Left ventricle myocardium inferior (tissue), 1 donor: ENCODE measurements at regions of chr2 and their contacts with region 1.

Region 1: GRCh38 chr2:10048501-10049171 is 5.3 kb downstream of the KLF11 start:
- DNase-seq: no peak
- H3K4me3 ChIP-seq: no peak overlapping the region
- H3K27ac ChIP-seq: peak overlapping the region; percentile 9
- H3K4me1 ChIP-seq: peaks cover 90% of the 10 kb centered on the region
- H3K27me3 ChIP-seq: no peaks in the 10 kb centered on the region
- CTCF ChIP-seq: peak; percentile 75

Region 2: GRCh38 chr2:9984217-9984739 is 64.4 kb before region 1 on chr2:
- intact Hi-C with region 1: loop called (anchors 5 kb)
- DNase-seq: no peak
- H3K4me3 ChIP-seq: no peak overlapping the region
- H3K27ac ChIP-seq: peak overlapping the region; percentile 12
- H3K4me1 ChIP-seq: peaks cover 29% of the 10 kb centered on the region
- H3K27me3 ChIP-seq: no peaks in the 10 kb centered on the region
- CTCF ChIP-seq: peak; percentile 84